ENCODE measurements at regions of chr16 and their contacts with region 1.

Region 1: DNA sequence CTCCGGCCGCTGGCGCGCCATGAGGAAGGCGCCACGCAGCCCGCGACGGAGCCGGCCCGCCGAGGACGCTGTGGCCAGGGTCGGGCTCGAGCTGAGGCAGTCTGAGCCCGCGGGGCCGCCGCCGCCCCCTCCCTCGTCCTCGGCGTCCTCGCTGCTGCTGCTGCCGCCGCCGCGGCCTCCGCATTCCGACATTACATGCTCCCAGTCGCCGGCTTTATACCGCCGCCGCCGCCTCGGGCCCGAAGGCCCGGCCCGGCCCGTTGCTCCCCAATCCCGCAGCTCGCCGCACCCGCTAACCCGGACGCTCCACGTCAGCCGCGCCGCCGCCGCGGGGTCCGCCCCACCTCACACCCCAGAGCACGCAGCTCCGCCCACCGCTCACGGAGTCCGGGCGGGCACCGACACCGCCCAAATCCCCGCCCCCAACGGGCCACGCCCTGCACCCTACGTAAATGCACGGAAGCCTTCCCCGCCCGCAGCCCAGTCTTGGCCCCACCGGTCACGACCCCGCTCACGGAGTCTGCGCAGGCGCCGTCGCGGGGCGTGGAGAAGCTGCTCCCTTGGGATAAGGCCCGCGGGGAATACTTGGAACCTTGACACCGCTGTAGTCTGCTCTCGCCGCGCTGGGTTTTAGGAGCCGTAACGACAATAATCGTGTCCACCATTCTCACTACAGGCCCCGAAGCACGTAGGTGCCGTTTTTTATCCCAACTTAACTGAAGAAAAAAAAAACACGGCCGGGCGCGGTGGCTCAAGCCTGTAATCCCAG is at the start of gene TXNDC11:
- DNase-seq: peak; percentile 97
- H3K4me3 Mint-ChIP-seq: peak within 1 kb of the TSS; percentile 86
- H3K27ac Mint-ChIP-seq: peak within 1 kb of the TSS; percentile 94
- H3K4me1 Mint-ChIP-seq: peaks cover 31% of the 10 kb centered on the region
- H3K27me3 Mint-ChIP-seq: no peaks in the 10 kb centered on the region
- CTCF ChIP-seq: no peak
- total RNA-seq, gene TXNDC11: 38.2 and 43.7 TPM in 2 replicates

Region 2: GRCh38 chr16:11105038-11105903 is 637.5 kb before region 1 on chr16:
- CTCF ChIA-PET with region 1: no interaction called
- POLR2A ChIA-PET with region 1: no interaction called
- intact Hi-C with region 1: no loop called
- DNase-seq: peak; percentile 72
- H3K4me3 Mint-ChIP-seq: no peak overlapping the region
- H3K27ac Mint-ChIP-seq: no peak overlapping the region
- H3K4me1 Mint-ChIP-seq: peaks cover 7% of the 10 kb centered on the region
- H3K27me3 Mint-ChIP-seq: no peaks in the 10 kb centered on the region
- CTCF ChIP-seq: no peak

Region 3: GRCh38 chr16:11459722-11460121 is 283.0 kb before region 1 on chr16:
- CTCF ChIA-PET with region 1: no interaction called
- POLR2A ChIA-PET with region 1: no interaction called
- intact Hi-C with region 1: no loop called
- DNase-seq: no peak
- H3K4me3 Mint-ChIP-seq: no peak overlapping the region
- H3K27ac Mint-ChIP-seq: no peak overlapping the region
- H3K4me1 Mint-ChIP-seq: no peaks in the 10 kb centered on the region
- H3K27me3 Mint-ChIP-seq: peaks cover 1% of the 10 kb centered on the region
- CTCF ChIP-seq: no peak

Region 4: GRCh38 chr16:11651796-11652195 is 90.9 kb before region 1 on chr16:
- CTCF ChIA-PET with region 1: no interaction called
- POLR2A ChIA-PET with region 1: no interaction called
- intact Hi-C with region 1: no loop called
- DNase-seq: peak; percentile 56
- H3K4me3 Mint-ChIP-seq: no peak overlapping the region
- H3K27ac Mint-ChIP-seq: peak overlapping the region; percentile 53
- H3K4me1 Mint-ChIP-seq: no peaks in the 10 kb centered on the region
- H3K27me3 Mint-ChIP-seq: no peaks in the 10 kb centered on the region
- CTCF ChIP-seq: no peak

Region 5: GRCh38 chr16:11689031-11689761 is 53.5 kb before region 1 on chr16:
- CTCF ChIA-PET with region 1: no interaction called
- POLR2A ChIA-PET with region 1: no interaction called
- intact Hi-C with region 1: no loop called
- DNase-seq: no peak
- H3K4me3 Mint-ChIP-seq: no peak overlapping the region
- H3K27ac Mint-ChIP-seq: no peak overlapping the region
- H3K4me1 Mint-ChIP-seq: no peaks in the 10 kb centered on the region
- H3K27me3 Mint-ChIP-seq: no peaks in the 10 kb centered on the region
- CTCF ChIP-seq: no peak

Region 6: GRCh38 chr16:11731222-11731621 is 11.5 kb before region 1 on chr16:
- CTCF ChIA-PET with region 1: interaction called, 3 read pairs
- POLR2A ChIA-PET with region 1: interaction called, 12 read pairs
- intact Hi-C with region 1: no loop called
- DNase-seq: no peak
- H3K4me3 Mint-ChIP-seq: no peak overlapping the region
- H3K27ac Mint-ChIP-seq: no peak overlapping the region
- H3K4me1 Mint-ChIP-seq: no peaks in the 10 kb centered on the region
- H3K27me3 Mint-ChIP-seq: no peaks in the 10 kb centered on the region
- CTCF ChIP-seq: no peak

Region 7: DNA sequence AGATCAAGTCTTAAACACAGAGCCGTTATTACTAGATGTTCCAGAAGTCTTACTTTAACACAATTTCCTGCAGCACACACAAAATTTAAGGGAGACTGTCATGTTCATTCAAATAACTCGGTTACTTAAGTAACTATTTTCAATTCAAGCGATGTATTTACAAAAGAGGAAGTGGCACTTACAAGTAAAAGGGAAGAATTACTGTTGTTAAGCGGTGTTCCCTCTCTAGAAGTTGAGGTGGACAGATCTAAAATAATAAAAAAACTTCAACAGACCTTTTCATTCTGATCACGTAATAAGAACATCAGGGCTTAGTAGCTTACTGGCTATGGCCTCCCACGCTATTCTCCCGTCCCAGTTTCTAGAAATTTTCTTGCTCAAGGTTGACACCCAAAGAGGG is 26.1 kb after region 1 on chr16:
- CTCF ChIA-PET with region 1: interaction called, 6 read pairs
- POLR2A ChIA-PET with region 1: interaction called, 10 read pairs
- intact Hi-C with region 1: no loop called
- DNase-seq: no peak
- H3K4me3 Mint-ChIP-seq: no peak overlapping the region
- H3K27ac Mint-ChIP-seq: no peak overlapping the region
- H3K4me1 Mint-ChIP-seq: no peaks in the 10 kb centered on the region
- H3K27me3 Mint-ChIP-seq: no peaks in the 10 kb centered on the region
- CTCF ChIP-seq: no peak

Region 8: GRCh38 chr16:11797166-11797956 is 54.6 kb after region 1 on chr16 and contains the start of gene ZC3H7A:
- CTCF ChIA-PET with region 1: interaction called, 13 read pairs
- POLR2A ChIA-PET with region 1: interaction called, 73 read pairs
- intact Hi-C with region 1: loop called (anchors 5 kb)
- DNase-seq: peak; percentile 97
- H3K4me3 Mint-ChIP-seq: peak within 1 kb of the TSS; percentile 91
- H3K27ac Mint-ChIP-seq: peak within 1 kb of the TSS; percentile 99
- H3K4me1 Mint-ChIP-seq: peaks cover 32% of the 10 kb centered on the region
- H3K27me3 Mint-ChIP-seq: no peaks in the 10 kb centered on the region
- CTCF ChIP-seq: peak; percentile 81
- total RNA-seq, gene ZC3H7A: 66.9 and 74.1 TPM in 2 replicates

Region 9: GRCh38 chr16:11833951-11834695 is 91.4 kb after region 1 on chr16:
- CTCF ChIA-PET with region 1: interaction called, 4 read pairs
- POLR2A ChIA-PET with region 1: interaction called, 31 read pairs
- intact Hi-C with region 1: no loop called
- DNase-seq: peak; percentile 92
- H3K4me3 Mint-ChIP-seq: peak overlapping the region; percentile 63
- H3K27ac Mint-ChIP-seq: peak overlapping the region; percentile 98
- H3K4me1 Mint-ChIP-seq: peaks cover 19% of the 10 kb centered on the region
- H3K27me3 Mint-ChIP-seq: no peaks in the 10 kb centered on the region
- CTCF ChIP-seq: no peak

Region 10: GRCh38 chr16:11851294-11852091 is 108.8 kb after region 1 on chr16 and contains the start of gene RSL1D1:
- CTCF ChIA-PET with region 1: interaction called, 3 read pairs
- POLR2A ChIA-PET with region 1: interaction called, 24 read pairs
- intact Hi-C with region 1: no loop called
- DNase-seq: peak; percentile 92
- H3K4me3 Mint-ChIP-seq: peak within 1 kb of the TSS; percentile 93
- H3K27ac Mint-ChIP-seq: peak within 1 kb of the TSS; percentile 90
- H3K4me1 Mint-ChIP-seq: peaks cover 22% of the 10 kb centered on the region
- H3K27me3 Mint-ChIP-seq: no peaks in the 10 kb centered on the region
- CTCF ChIP-seq: no peak
- total RNA-seq, gene RSL1D1: 302 and 406 TPM in 2 replicates